ENCODE measurements at regions of chr9 and their contacts with region 1.

Region 1: GRCh38 chr9:95336281-95336680 is 18.8 kb upstream of the FANCC start:
- DNase-seq: peak; percentile 35
- ATAC-seq: peak; percentile 70
- H3K4me3 Mint-ChIP-seq: no peak overlapping the region
- H3K27ac Mint-ChIP-seq: no peak overlapping the region
- H3K4me1 Mint-ChIP-seq: no peaks in the 10 kb centered on the region
- H3K27me3 Mint-ChIP-seq: peaks cover 4% of the 10 kb centered on the region
- CTCF ChIP-seq: peak; percentile 80

Region 2: GRCh38 chr9:95317119-95317892 is 19.0 kb before region 1 on chr9 and contains the start of gene FANCC:
- CTCF ChIA-PET with region 1: interaction called, 13 read pairs
- POLR2A ChIA-PET with region 1: interaction called, 4 read pairs
- intact Hi-C with region 1: no loop called
- DNase-seq: peak; percentile 86
- ATAC-seq: peak; percentile 86
- H3K4me3 Mint-ChIP-seq: peak within 1 kb of the TSS; percentile 87
- H3K27ac Mint-ChIP-seq: peak within 1 kb of the TSS; percentile 96
- H3K4me1 Mint-ChIP-seq: peaks cover 14% of the 10 kb centered on the region
- H3K27me3 Mint-ChIP-seq: peaks cover 8% of the 10 kb centered on the region
- CTCF ChIP-seq: no peak
- total RNA-seq, gene FANCC: 11.5 to 12.4 TPM

Region 3: DNA sequence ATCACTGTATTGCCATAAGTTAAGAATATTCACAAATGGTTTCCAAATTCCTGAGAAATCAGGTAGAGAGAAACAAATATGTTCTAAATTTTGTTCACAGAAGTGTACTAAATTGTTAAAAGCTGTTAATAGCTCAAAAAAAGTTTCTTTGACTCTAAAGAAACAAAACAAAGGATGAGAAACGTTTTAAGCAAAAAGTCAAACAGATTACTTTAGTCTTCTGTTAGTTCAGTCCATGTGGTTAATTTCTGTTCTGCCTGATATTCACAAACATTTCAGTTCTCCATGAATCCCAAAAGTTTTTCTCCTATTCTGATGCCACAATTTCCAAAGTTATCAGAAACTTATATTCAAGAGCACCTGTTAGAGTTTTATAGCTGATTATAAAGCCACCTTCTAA is 11.1 kb before region 1 on chr9:
- CTCF ChIA-PET with region 1: interaction called, 13 read pairs
- POLR2A ChIA-PET with region 1: no interaction called
- intact Hi-C with region 1: no loop called
- DNase-seq: no peak
- ATAC-seq: no peak
- H3K4me3 Mint-ChIP-seq: no peak overlapping the region
- H3K27ac Mint-ChIP-seq: no peak overlapping the region
- H3K4me1 Mint-ChIP-seq: peaks cover 3% of the 10 kb centered on the region
- H3K27me3 Mint-ChIP-seq: no peaks in the 10 kb centered on the region
- CTCF ChIP-seq: no peak

Region 4: DNA sequence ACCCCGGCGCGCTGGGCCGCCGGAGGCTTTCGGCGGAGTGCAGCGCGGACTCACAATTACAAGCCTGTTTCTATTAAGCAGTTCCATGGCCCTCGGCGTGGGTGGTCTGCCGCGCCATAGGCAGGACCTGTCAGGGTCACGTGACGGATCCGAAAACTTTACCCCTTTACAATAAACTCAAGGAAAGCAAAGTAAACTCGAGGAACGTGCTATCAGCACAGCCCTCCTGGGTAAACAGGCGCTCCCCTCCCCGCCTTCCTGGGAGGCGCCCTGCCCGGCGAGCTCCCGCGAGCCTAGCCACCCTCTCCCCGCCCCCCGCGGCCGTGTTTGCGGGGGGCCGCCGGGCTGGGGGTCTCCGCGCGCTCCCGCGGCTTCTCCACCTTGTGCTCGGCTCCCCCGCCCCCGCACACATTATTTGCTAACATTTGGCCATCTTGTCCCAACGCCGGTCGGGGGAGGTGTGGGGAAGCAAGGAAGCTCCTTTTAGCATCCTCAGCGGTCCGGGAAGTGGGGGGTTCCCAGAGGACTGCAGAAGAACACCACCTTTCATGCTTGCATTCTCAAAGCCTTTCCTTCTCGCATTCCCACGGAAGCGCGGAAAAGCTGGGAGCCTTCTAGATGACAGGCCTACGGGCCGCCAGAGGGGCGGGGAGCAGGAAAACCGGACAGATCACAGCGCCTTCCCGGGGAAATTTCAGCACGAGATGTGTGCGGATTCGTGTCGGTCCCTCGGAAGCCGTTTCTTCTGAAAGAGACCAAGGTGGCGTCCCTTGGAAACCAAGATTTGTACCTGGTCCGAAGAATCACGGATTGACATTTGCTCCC is 180.7 kb after region 1 on chr9 and contains the start of gene PTCH1:
- CTCF ChIA-PET with region 1: no interaction called
- POLR2A ChIA-PET with region 1: no interaction called
- intact Hi-C with region 1: no loop called
- DNase-seq: peak; percentile 78
- ATAC-seq: peak; percentile 55
- H3K4me3 Mint-ChIP-seq: peak within 1 kb of the TSS; percentile 95
- H3K27ac Mint-ChIP-seq: peak within 1 kb of the TSS; percentile 88
- H3K4me1 Mint-ChIP-seq: peaks cover 25% of the 10 kb centered on the region
- H3K27me3 Mint-ChIP-seq: peaks cover 32% of the 10 kb centered on the region
- CTCF ChIP-seq: no peak
- total RNA-seq, gene PTCH1: 5.4 to 7.3 TPM

Region 5: GRCh38 chr9:95793924-95794828 is 457.9 kb after region 1 on chr9:
- CTCF ChIA-PET with region 1: no interaction called
- POLR2A ChIA-PET with region 1: no interaction called
- intact Hi-C with region 1: no loop called
- DNase-seq: no peak
- ATAC-seq: no peak
- H3K4me3 Mint-ChIP-seq: no peak overlapping the region
- H3K27ac Mint-ChIP-seq: no peak overlapping the region
- H3K4me1 Mint-ChIP-seq: no peaks in the 10 kb centered on the region
- H3K27me3 Mint-ChIP-seq: peaks cover 4% of the 10 kb centered on the region
- CTCF ChIP-seq: no peak

Measured in activated CD8-positive, alpha-beta T cell treated with anti-CD3 and anti-CD28 coated beads for 36 hours (primary cell).